ENCODE measurements at regions of chr3 and their contacts with region 1.

Region 1: GRCh38 chr3:4797201-4797705 is 182.0 kb upstream of the BHLHE40 start:
- DNase-seq: no peak
- H3K4me3 ChIP-seq: no peak overlapping the region
- H3K27ac ChIP-seq: no peak overlapping the region
- H3K4me1 ChIP-seq: no peaks in the 10 kb centered on the region
- H3K27me3 ChIP-seq: no peaks in the 10 kb centered on the region
- CTCF ChIP-seq: no peak
- POLR2A ChIP-seq: no peak

Region 2: GRCh38 chr3:4750306-4750968 is 46.8 kb before region 1 on chr3:
- intact Hi-C with region 1: loop called (anchors 1 kb)
- DNase-seq: no peak
- H3K4me3 ChIP-seq: peak overlapping the region in 2 of 3 donors; percentile 31 to 45
- H3K27ac ChIP-seq: peak overlapping the region; percentile 90 to 91
- H3K4me1 ChIP-seq: peaks cover 4 to 30% of the 10 kb centered on the region in 2 donors
- H3K27me3 ChIP-seq: no peaks in the 10 kb centered on the region
- CTCF ChIP-seq: no peak
- POLR2A ChIP-seq: no peak

Measured in breast epithelium (tissue), 4 donors.